ENCODE measurements at regions of chr16 and their contacts with region 1.

Region 1: DNA sequence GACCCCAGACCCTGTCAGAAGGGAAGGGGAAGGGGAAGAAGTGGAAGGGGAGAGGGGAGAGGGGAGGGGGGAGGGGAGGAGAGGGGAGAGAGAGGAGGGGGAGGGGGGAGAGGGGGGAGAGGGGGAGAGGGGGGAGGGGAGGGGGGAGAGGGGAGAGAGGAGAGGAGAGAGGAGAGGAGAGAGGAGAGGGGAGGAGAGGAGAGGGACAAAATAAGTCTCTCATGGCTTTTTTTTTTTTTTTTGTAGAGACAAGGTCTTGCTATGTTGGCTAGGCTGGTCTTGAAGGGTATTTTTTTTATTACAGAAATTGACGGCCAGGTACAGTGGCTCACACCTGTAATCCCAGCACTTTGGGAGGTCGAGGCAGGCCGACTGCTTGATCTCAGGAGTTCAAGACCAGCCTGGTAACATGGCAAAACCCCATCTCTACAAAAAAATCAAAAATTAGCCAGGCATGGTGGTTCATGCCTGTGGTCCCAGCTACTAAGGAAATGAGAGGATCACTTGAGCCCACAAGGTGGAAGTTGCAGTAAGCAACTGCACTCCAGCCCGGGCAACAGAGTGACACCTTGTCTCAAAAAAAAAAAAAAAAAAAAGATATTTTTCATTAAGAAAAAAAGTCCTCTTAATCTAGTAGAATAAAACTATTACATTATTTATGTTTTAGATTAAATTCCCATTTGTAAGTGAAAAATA is 19.2 kb downstream of the AMFR start:
- DNase-seq: no peak
- ATAC-seq: no peak
- H3K4me3 ChIP-seq: no peak overlapping the region
- H3K4me3 Mint-ChIP-seq: no peak overlapping the region
- H3K27ac ChIP-seq: no peak overlapping the region
- H3K27ac Mint-ChIP-seq: no peak overlapping the region
- H3K4me1 ChIP-seq: no peaks in the 10 kb centered on the region
- H3K4me1 Mint-ChIP-seq: no peaks in the 10 kb centered on the region
- H3K27me3 ChIP-seq: no peaks in the 10 kb centered on the region
- H3K27me3 Mint-ChIP-seq: no peaks in the 10 kb centered on the region

Region 2: GRCh38 chr16:56450986-56451752 is 45.0 kb after region 1 on chr16 and contains the starts of genes NUDT21 and OGFOD1:
- CTCF ChIA-PET with region 1: interaction called in 1 of 2 experiments, 10 read pairs
- POLR2A ChIA-PET with region 1: no interaction called
- DNase-seq: peak; percentile 66 to 96 (median 92)
- ATAC-seq: peak; percentile 99
- H3K4me3 ChIP-seq: peak within 1 kb of the TSS; percentile 87 to 96
- H3K4me3 Mint-ChIP-seq: peak within 1 kb of the TSS; percentile 94 to 98 (median 94)
- H3K27ac ChIP-seq: peak within 1 kb of the TSS; percentile 54
- H3K27ac Mint-ChIP-seq: peak within 1 kb of the TSS; percentile 94 to 95
- H3K4me1 ChIP-seq: peaks cover 21 to 24% of the 10 kb centered on the region in 2 experiments
- H3K4me1 Mint-ChIP-seq: peaks cover 59 to 65% (median 61%) of the 10 kb centered on the region in 3 donors
- H3K27me3 ChIP-seq: no peaks in the 10 kb centered on the region
- H3K27me3 Mint-ChIP-seq: no peaks in the 10 kb centered on the region
- total RNA-seq, gene NUDT21: 90.0 to 98.8 (median 98.4) TPM
- total RNA-seq, gene OGFOD1: 18.1 to 49.9 (median 47.5) TPM